Dorsolateral prefrontal cortex (tissue), 120 donors: ENCODE measurements at regions of chr6 and their contacts with region 1.

Region 1: GRCh38 chr6:5205877-5206850 is 54.6 kb downstream of the LYRM4 start:
- DNase-seq: peak; percentile 54 to 84 (median 74)
- H3K4me3 ChIP-seq: peak overlapping the region in 14 of 59 donors; percentile 3 to 31 (median 14)
- H3K27ac ChIP-seq: peak overlapping the region; percentile 63 to 99 (median 96)
- H3K27me3 ChIP-seq: no peaks in the 10 kb centered on the region
- CTCF ChIP-seq: peak in 20 of 56 donors; percentile 8 to 43 (median 26)

Region 2: GRCh38 chr6:5151955-5152401 is 54.2 kb before region 1 on chr6:
- intact Hi-C with region 1: loop called in 1 of 2 experiments (anchors 10 kb)
- DNase-seq: peak in 7 of 10 donors; percentile 52 to 71 (median 64)
- H3K4me3 ChIP-seq: peak overlapping the region in 43 of 59 donors; percentile 0 to 46 (median 20)
- H3K27ac ChIP-seq: peak overlapping the region in 52 of 59 donors; percentile 6 to 77 (median 54)
- H3K27me3 ChIP-seq: no peaks in the 10 kb centered on the region
- CTCF ChIP-seq: peak in 2 of 56 donors; percentile 6 to 16

Region 3: DNA sequence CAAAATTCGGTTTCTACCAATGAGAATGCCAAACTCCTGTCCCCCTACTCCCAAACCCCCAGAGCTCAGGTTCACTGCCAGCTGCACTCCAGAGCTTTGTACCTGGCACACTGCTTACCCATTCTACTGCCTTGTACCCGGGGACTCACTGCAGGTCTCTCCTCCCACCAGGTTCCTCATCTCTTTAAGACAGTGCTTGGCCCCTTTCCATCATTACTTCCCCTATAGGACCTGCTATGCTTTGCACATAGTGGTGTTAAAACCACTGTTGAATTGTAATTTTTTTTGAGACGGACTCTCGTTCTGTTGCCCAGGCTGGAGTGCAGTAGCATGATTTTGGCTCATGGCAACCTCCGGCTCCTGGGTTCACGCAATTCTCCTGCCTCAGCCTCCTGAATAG is 28.7 kb after region 1 on chr6:
- intact Hi-C with region 1: no loop called
- DNase-seq: no peak
- H3K4me3 ChIP-seq: no peak overlapping the region
- H3K27ac ChIP-seq: peak overlapping the region in 6 of 59 donors; percentile 2 to 39 (median 16)
- H3K27me3 ChIP-seq: no peaks in the 10 kb centered on the region
- CTCF ChIP-seq: no peak